IMR-90 (cell line): ENCODE measurements at regions of chr5 and their contacts with region 1.

Region 1: GRCh38 chr5:39775458-39776365 is 350.9 kb upstream of the DAB2 start:
- DNase-seq: peak; percentile 92
- ATAC-seq: peak; percentile 96
- H3K4me3 ChIP-seq: no peak overlapping the region
- H3K27ac ChIP-seq: peak overlapping the region; percentile 98
- H3K4me1 ChIP-seq: peaks cover 15% of the 10 kb centered on the region
- H3K27me3 ChIP-seq: no peaks in the 10 kb centered on the region
- CTCF ChIP-seq: no peak
- POLR2A ChIP-seq: no peak
- RAD21 ChIP-seq: no peak

Region 2: GRCh38 chr5:39424736-39425637 is 350.7 kb before region 1 on chr5 and contains the start of gene DAB2:
- CTCF ChIA-PET with region 1: no interaction called
- POLR2A ChIA-PET with region 1: no interaction called
- dilution Hi-C with region 1: no loop called
- in situ Hi-C with region 1: no loop called
- intact Hi-C with region 1: no loop called
- DNase-seq: peak; percentile 96
- ATAC-seq: peak; percentile 77
- H3K4me3 ChIP-seq: peak within 1 kb of the TSS; percentile 99
- H3K27ac ChIP-seq: peak within 1 kb of the TSS; percentile 89
- H3K4me1 ChIP-seq: peaks cover 18% of the 10 kb centered on the region
- H3K27me3 ChIP-seq: no peaks in the 10 kb centered on the region
- CTCF ChIP-seq: peak; percentile 78
- POLR2A ChIP-seq: peak; percentile 98
- RAD21 ChIP-seq: peak; percentile 61
- total RNA-seq, gene DAB2: 50.0 and 97.2 TPM in 2 replicates

Region 3: GRCh38 chr5:39447059-39447458 is 328.7 kb before region 1 on chr5:
- CTCF ChIA-PET with region 1: no interaction called
- POLR2A ChIA-PET with region 1: no interaction called
- dilution Hi-C with region 1: no loop called
- in situ Hi-C with region 1: no loop called
- intact Hi-C with region 1: no loop called
- DNase-seq: peak; percentile 31
- ATAC-seq: no peak; the same call in 1 of the 2 replicates
- H3K4me3 ChIP-seq: no peak overlapping the region
- H3K27ac ChIP-seq: no peak overlapping the region
- H3K4me1 ChIP-seq: peaks cover 3% of the 10 kb centered on the region
- H3K27me3 ChIP-seq: no peaks in the 10 kb centered on the region
- CTCF ChIP-seq: no peak
- POLR2A ChIP-seq: no peak
- RAD21 ChIP-seq: no peak

Region 4: GRCh38 chr5:39570403-39571027 is 205.2 kb before region 1 on chr5:
- CTCF ChIA-PET with region 1: no interaction called
- POLR2A ChIA-PET with region 1: no interaction called
- dilution Hi-C with region 1: no loop called
- in situ Hi-C with region 1: no loop called
- intact Hi-C with region 1: no loop called
- DNase-seq: peak; percentile 61
- ATAC-seq: peak; percentile 79
- H3K4me3 ChIP-seq: no peak overlapping the region
- H3K27ac ChIP-seq: no peak overlapping the region
- H3K4me1 ChIP-seq: no peaks in the 10 kb centered on the region
- H3K27me3 ChIP-seq: peaks cover 13% of the 10 kb centered on the region
- CTCF ChIP-seq: peak; percentile 79
- POLR2A ChIP-seq: no peak
- RAD21 ChIP-seq: peak; percentile 82

Region 5: DNA sequence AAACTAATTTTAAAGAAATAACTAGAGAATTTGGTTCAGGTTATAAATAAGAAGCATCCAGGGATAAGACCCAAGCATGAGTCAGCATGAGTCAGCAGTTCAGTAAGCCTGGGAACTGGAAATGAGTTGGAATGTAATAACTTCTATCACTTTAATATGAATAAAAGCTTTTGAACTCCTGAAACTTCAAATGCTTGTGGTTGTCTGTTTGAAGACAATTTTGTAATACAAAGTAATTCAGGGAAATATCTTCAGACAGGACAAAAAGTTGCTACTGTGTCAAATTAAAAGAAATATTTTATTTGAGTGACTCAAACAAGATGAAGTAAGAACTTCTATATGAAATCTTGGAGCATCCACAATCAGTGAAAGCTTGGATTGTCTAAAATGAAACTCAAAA is 19.7 kb before region 1 on chr5:
- CTCF ChIA-PET with region 1: no interaction called
- POLR2A ChIA-PET with region 1: no interaction called
- dilution Hi-C with region 1: no loop called
- in situ Hi-C with region 1: no loop called
- intact Hi-C with region 1: loop called (anchors 2 kb)
- DNase-seq: peak; percentile 96
- ATAC-seq: peak; percentile 61
- H3K4me3 ChIP-seq: no peak overlapping the region
- H3K27ac ChIP-seq: peak overlapping the region; percentile 40; the same call in 1 of the 2 replicates
- H3K4me1 ChIP-seq: peaks cover 2% of the 10 kb centered on the region; the same call in 1 of the 2 replicates
- H3K27me3 ChIP-seq: no peaks in the 10 kb centered on the region
- CTCF ChIP-seq: no peak
- POLR2A ChIP-seq: no peak
- RAD21 ChIP-seq: no peak

Region 6: GRCh38 chr5:40823459-40823858 is 1047.7 kb after region 1 on chr5:
- CTCF ChIA-PET with region 1: no interaction called
- POLR2A ChIA-PET with region 1: interaction called, 11 read pairs
- dilution Hi-C with region 1: no loop called
- in situ Hi-C with region 1: no loop called
- intact Hi-C with region 1: no loop called
- DNase-seq: no peak
- ATAC-seq: peak; percentile 27
- H3K4me3 ChIP-seq: no peak overlapping the region
- H3K27ac ChIP-seq: no peak overlapping the region
- H3K4me1 ChIP-seq: no peaks in the 10 kb centered on the region
- H3K27me3 ChIP-seq: no peaks in the 10 kb centered on the region
- CTCF ChIP-seq: no peak
- POLR2A ChIP-seq: no peak
- RAD21 ChIP-seq: no peak